ENCODE measurements at regions of chr14 and their contacts with region 1.

Region 1: GRCh38 chr14:70907176-70907995 is at the start of gene PCNX1:
- DNase-seq: no peak
- ATAC-seq: peak; percentile 75
- H3K4me3 ChIP-seq: peak within 1 kb of the TSS; percentile 91
- H3K27ac ChIP-seq: peak within 1 kb of the TSS; percentile 87
- H3K4me1 ChIP-seq: 0 out of 2 replicates have a peak, but pooled peaks cover 5% of the 10 kb centered on the region
- H3K27me3 ChIP-seq: no peaks in the 10 kb centered on the region
- CTCF ChIP-seq: peak; percentile 77 to 89 (median 77); a peak in 5 of 6 replicates
- EP300 ChIP-seq: no peak; a peak in 1 of 4 replicates
- POLR2A ChIP-seq: peak; percentile 72; the same call in 1 of the 2 replicates
- RAD21 ChIP-seq: peak; percentile 73
- polyA plus RNA-seq, gene PCNX1: 4.6 to 5.1 TPM

Region 2: GRCh38 chr14:70714055-70714621 is 193.2 kb before region 1 on chr14:
- CTCF ChIA-PET with region 1: no interaction called
- POLR2A ChIA-PET with region 1: no interaction called
- RAD21 ChIA-PET with region 1: no interaction called
- SMC1A ChIA-PET with region 1: no interaction called
- in situ Hi-C with region 1: no loop called
- intact Hi-C with region 1: no loop called
- DNase-seq: peak; percentile 50
- ATAC-seq: peak; percentile 63
- H3K4me3 ChIP-seq: no peak overlapping the region; the same call in 1 of the 2 replicates
- H3K27ac ChIP-seq: peak overlapping the region; percentile 52; the same call in 1 of the 2 replicates
- H3K4me1 ChIP-seq: peaks cover 6% of the 10 kb centered on the region
- H3K27me3 ChIP-seq: no peaks in the 10 kb centered on the region
- CTCF ChIP-seq: peak; percentile 42 to 55 (median 51); a peak in 5 of 6 replicates
- EP300 ChIP-seq: no peak
- POLR2A ChIP-seq: no peak
- RAD21 ChIP-seq: peak; percentile 72

Region 3: GRCh38 chr14:70873627-70874026 is 33.8 kb before region 1 on chr14:
- CTCF ChIA-PET with region 1: interaction called, 33 read pairs
- POLR2A ChIA-PET with region 1: interaction called, 5 read pairs
- RAD21 ChIA-PET with region 1: interaction called, 28 read pairs
- SMC1A ChIA-PET with region 1: interaction called, 5 read pairs
- in situ Hi-C with region 1: no loop called
- intact Hi-C with region 1: loop called (anchors 5 kb)
- DNase-seq: no peak
- ATAC-seq: peak; percentile 65
- H3K4me3 ChIP-seq: no peak overlapping the region
- H3K27ac ChIP-seq: no peak overlapping the region
- H3K4me1 ChIP-seq: peaks cover 14% of the 10 kb centered on the region
- H3K27me3 ChIP-seq: no peaks in the 10 kb centered on the region
- CTCF ChIP-seq: peak; percentile 2 to 24 (median 6); a peak in 2 of 6 replicates
- EP300 ChIP-seq: no peak
- POLR2A ChIP-seq: no peak
- RAD21 ChIP-seq: no peak

Region 4: GRCh38 chr14:70887207-70887681 is 20.1 kb before region 1 on chr14:
- CTCF ChIA-PET with region 1: interaction called, 110 read pairs
- POLR2A ChIA-PET with region 1: interaction called, 9 read pairs
- RAD21 ChIA-PET with region 1: interaction called, 17 read pairs
- SMC1A ChIA-PET with region 1: interaction called, 48 read pairs
- in situ Hi-C with region 1: no loop called
- intact Hi-C with region 1: loop called (anchors 1 kb)
- DNase-seq: peak; percentile 71
- ATAC-seq: peak; percentile 72
- H3K4me3 ChIP-seq: peak overlapping the region; percentile 56
- H3K27ac ChIP-seq: peak overlapping the region; percentile 98
- H3K4me1 ChIP-seq: peaks cover 65% of the 10 kb centered on the region
- H3K27me3 ChIP-seq: no peaks in the 10 kb centered on the region
- CTCF ChIP-seq: no peak
- EP300 ChIP-seq: peak in 1 of 2 experiments; percentile 54; a peak in 1 of 4 replicates
- POLR2A ChIP-seq: no peak
- RAD21 ChIP-seq: no peak

Region 5: DNA sequence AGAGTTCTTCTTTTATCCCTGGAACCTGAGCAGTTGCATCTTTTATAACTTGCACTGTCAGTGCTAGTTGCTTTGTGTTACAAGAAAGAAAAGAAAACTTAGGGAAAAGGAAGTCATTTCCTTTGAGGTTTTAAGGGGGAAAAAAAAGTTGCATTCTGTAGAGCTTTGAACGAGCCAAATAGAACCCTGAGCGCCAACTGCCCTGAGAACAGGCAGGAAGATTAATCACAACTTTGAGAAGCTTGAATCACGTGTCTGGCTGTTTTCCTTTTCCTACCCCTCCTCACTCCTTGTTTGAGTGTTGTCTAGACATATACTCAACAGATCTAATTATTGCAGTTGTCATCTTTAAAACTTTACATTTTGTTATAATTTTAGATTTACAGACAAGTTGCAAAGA is 12.4 kb after region 1 on chr14:
- CTCF ChIA-PET with region 1: interaction called, 11 read pairs
- POLR2A ChIA-PET with region 1: interaction called, 4 read pairs
- RAD21 ChIA-PET with region 1: interaction called, 4 read pairs
- SMC1A ChIA-PET with region 1: interaction called, 10 read pairs
- in situ Hi-C with region 1: no loop called
- intact Hi-C with region 1: no loop called
- DNase-seq: no peak
- ATAC-seq: no peak
- H3K4me3 ChIP-seq: no peak overlapping the region
- H3K27ac ChIP-seq: no peak overlapping the region
- H3K4me1 ChIP-seq: peaks cover 10% of the 10 kb centered on the region
- H3K27me3 ChIP-seq: no peaks in the 10 kb centered on the region
- CTCF ChIP-seq: no peak
- EP300 ChIP-seq: no peak
- POLR2A ChIP-seq: no peak
- RAD21 ChIP-seq: no peak

Region 6: DNA sequence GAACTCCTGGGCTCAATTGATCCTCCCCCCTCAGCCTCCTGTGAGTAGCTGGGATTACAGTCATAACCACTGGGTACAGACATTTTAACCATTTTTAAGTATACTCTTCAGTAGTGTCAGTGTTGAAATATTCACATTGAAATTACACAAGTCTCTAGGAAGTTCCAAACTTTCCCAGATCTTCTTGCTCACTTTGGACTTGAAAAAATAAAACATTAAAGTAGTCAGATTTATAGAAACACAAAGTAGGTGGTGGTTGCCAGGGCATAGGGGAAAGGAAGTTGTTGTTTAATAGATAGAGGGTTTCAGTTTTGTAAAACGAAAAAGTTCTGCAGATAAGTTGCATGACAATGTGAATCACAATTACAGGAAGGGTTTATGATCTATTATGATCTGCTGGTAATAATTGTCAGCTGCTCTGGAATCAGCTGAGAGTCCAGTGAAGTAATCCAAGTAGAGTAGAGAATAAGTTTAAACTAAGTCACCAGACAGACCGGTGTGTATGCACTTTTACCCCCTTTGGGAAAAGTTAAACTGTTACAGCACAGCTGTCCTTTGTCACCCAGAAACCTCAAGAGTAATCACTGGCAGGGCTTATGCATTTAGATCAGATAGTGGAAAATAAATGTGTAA is 27.2 kb after region 1 on chr14:
- CTCF ChIA-PET with region 1: interaction called, 46 read pairs
- POLR2A ChIA-PET with region 1: interaction called, 6 read pairs
- RAD21 ChIA-PET with region 1: interaction called, 4 read pairs
- SMC1A ChIA-PET with region 1: interaction called, 10 read pairs
- in situ Hi-C with region 1: no loop called
- intact Hi-C with region 1: no loop called
- DNase-seq: peak; percentile 34
- ATAC-seq: peak; percentile 90
- H3K4me3 ChIP-seq: peak overlapping the region; percentile 38; the same call in 1 of the 2 replicates
- H3K27ac ChIP-seq: peak overlapping the region; percentile 56
- H3K4me1 ChIP-seq: peaks cover 14% of the 10 kb centered on the region; the same call in 1 of the 2 replicates
- H3K27me3 ChIP-seq: no peaks in the 10 kb centered on the region
- CTCF ChIP-seq: no peak
- EP300 ChIP-seq: no peak
- POLR2A ChIP-seq: no peak
- RAD21 ChIP-seq: no peak

Region 7: GRCh38 chr14:70972107-70972976 is 65.0 kb after region 1 on chr14:
- CTCF ChIA-PET with region 1: interaction called, 23 read pairs
- POLR2A ChIA-PET with region 1: interaction called, 3 read pairs
- RAD21 ChIA-PET with region 1: interaction called, 10 read pairs
- SMC1A ChIA-PET with region 1: interaction called, 5 read pairs
- in situ Hi-C with region 1: no loop called
- intact Hi-C with region 1: loop called (anchors 1 kb)
- DNase-seq: peak; percentile 44
- ATAC-seq: peak; percentile 94
- H3K4me3 ChIP-seq: no peak overlapping the region
- H3K27ac ChIP-seq: no peak overlapping the region
- H3K4me1 ChIP-seq: no peaks in the 10 kb centered on the region
- H3K27me3 ChIP-seq: no peaks in the 10 kb centered on the region
- CTCF ChIP-seq: peak; percentile 79 to 91 (median 83)
- EP300 ChIP-seq: no peak
- POLR2A ChIP-seq: no peak
- RAD21 ChIP-seq: peak; percentile 92

Region 8: DNA sequence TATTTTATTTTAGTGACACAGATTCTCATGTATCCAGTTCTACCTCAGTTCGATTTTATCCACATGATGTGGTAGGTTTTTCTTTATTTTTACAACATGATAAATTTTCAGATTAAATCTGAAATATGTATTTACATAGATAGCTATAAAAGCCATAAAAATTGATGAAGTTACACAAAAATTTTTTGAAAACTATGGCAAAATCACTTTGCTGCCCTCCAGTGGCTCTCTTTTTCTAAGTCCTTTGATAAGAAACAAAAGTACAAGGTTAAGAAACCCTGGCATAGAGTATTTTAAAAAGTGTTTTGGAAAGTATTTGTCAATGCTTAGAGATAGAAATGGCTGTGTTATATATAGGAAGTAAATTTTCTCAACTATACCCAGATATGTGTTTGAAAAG is 104.1 kb after region 1 on chr14:
- CTCF ChIA-PET with region 1: no interaction called
- POLR2A ChIA-PET with region 1: no interaction called
- RAD21 ChIA-PET with region 1: no interaction called
- SMC1A ChIA-PET with region 1: no interaction called
- in situ Hi-C with region 1: no loop called
- intact Hi-C with region 1: no loop called
- DNase-seq: no peak
- ATAC-seq: no peak
- H3K4me3 ChIP-seq: no peak overlapping the region
- H3K27ac ChIP-seq: no peak overlapping the region
- H3K4me1 ChIP-seq: no peaks in the 10 kb centered on the region
- H3K27me3 ChIP-seq: no peaks in the 10 kb centered on the region
- CTCF ChIP-seq: no peak; a peak in 1 of 6 replicates
- EP300 ChIP-seq: no peak
- POLR2A ChIP-seq: no peak
- RAD21 ChIP-seq: no peak

Region 9: DNA sequence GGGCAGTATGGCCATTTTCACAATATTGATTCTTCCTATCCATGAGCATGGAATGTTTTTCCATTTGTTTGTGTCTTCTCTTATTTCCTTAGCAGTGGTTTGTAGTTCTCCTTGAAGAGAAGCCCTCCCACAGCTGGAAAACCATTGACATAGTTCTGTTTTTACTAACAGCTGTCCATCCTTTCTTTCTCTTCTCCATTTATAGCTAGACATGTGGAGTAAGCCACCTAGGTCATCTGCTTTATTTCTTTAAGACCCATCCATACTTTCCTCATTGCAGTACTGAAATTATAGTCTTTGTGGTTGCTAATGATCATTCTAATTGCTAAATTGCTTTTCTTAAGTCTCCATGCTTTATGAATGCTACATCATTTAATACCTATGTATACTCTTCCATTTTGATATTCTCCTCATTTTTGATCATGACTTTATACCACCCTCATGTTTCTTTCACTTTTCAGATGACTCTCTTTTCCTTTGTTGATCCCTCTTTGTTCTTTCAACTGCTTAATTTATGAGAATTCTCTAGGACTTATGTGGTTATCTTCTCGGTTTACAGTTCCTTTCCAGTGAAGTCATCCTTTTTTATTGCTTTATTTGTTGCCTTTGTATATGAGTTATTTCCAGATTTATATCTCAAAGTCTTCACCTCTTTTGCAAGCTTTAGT is 114.1 kb after region 1 on chr14:
- CTCF ChIA-PET with region 1: no interaction called
- POLR2A ChIA-PET with region 1: no interaction called
- RAD21 ChIA-PET with region 1: no interaction called
- SMC1A ChIA-PET with region 1: no interaction called
- in situ Hi-C with region 1: no loop called
- intact Hi-C with region 1: no loop called
- DNase-seq: no peak
- ATAC-seq: no peak
- H3K4me3 ChIP-seq: no peak overlapping the region
- H3K27ac ChIP-seq: no peak overlapping the region
- H3K4me1 ChIP-seq: no peaks in the 10 kb centered on the region
- H3K27me3 ChIP-seq: no peaks in the 10 kb centered on the region
- CTCF ChIP-seq: no peak
- EP300 ChIP-seq: no peak
- POLR2A ChIP-seq: no peak
- RAD21 ChIP-seq: no peak

Region 10: DNA sequence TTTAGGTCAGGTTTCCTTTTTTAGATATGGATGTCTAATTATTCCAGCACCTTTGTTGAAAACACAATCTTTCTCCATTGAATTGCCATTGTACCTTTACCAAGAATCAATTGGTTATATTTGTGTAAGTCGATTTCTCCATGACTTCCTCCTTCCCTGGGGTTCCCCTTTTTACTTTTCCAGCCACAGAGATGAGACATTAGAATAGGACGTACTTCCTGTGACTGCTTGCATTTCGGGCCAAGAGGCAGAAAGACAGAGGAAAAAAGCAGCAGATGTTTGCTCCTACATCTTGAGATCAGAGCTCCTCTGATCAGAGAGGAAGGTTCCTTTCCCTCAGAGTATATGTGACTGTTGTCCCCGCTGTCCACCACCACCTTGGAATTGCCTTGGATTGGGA is 571.2 kb after region 1 on chr14:
- CTCF ChIA-PET with region 1: no interaction called
- POLR2A ChIA-PET with region 1: no interaction called
- RAD21 ChIA-PET with region 1: no interaction called
- SMC1A ChIA-PET with region 1: no interaction called
- in situ Hi-C with region 1: no loop called
- intact Hi-C with region 1: no loop called
- DNase-seq: no peak
- ATAC-seq: peak; percentile 54
- H3K4me3 ChIP-seq: 0 out of 2 replicates have a peak overlapping the region, but pooled peaks have one; percentile 10
- H3K27ac ChIP-seq: peak overlapping the region; percentile 78
- H3K4me1 ChIP-seq: peaks cover 35% of the 10 kb centered on the region
- H3K27me3 ChIP-seq: no peaks in the 10 kb centered on the region
- CTCF ChIP-seq: no peak
- EP300 ChIP-seq: no peak
- POLR2A ChIP-seq: no peak
- RAD21 ChIP-seq: no peak

Measured in GM12878 (cell line).